Right ventricle myocardium inferior (tissue), 1 donor: ENCODE measurements at regions of chr17 and their contacts with region 1.

Region 1: GRCh38 chr17:48351831-48352332 is 78.1 kb downstream of the SKAP1 start:
- DNase-seq: no peak
- ATAC-seq: no peak

Region 2: GRCh38 chr17:48215583-48216139 is 136.2 kb before region 1 on chr17:
- intact Hi-C with region 1: no loop called
- DNase-seq: no peak
- ATAC-seq: no peak

Region 3: DNA sequence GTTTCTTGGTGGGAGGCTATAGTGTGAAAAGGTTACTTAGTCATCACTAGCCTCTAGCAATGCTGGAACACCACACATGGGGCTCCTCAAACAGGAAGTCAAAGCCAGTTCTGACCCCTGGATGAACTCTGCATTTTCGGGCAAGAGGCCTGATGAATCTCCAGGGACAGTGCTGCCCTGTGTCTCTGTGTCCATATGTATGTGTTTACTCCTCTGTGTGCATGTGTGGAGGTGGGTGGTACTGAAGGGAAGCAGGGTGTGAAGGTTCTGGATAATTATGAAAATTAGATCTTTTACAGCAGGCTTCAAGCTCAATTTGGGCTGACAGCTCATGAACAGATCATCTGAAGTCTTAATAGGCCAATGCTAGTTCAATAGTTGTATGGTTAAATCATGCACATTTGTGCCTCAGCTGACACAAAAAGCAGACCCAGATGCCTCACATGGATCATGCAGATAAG is 110.7 kb before region 1 on chr17:
- intact Hi-C with region 1: no loop called
- DNase-seq: no peak
- ATAC-seq: peak; percentile 74

Region 4: GRCh38 chr17:48374650-48375230 is 22.9 kb after region 1 on chr17:
- intact Hi-C with region 1: no loop called
- DNase-seq: no peak
- ATAC-seq: no peak

Region 5: DNA sequence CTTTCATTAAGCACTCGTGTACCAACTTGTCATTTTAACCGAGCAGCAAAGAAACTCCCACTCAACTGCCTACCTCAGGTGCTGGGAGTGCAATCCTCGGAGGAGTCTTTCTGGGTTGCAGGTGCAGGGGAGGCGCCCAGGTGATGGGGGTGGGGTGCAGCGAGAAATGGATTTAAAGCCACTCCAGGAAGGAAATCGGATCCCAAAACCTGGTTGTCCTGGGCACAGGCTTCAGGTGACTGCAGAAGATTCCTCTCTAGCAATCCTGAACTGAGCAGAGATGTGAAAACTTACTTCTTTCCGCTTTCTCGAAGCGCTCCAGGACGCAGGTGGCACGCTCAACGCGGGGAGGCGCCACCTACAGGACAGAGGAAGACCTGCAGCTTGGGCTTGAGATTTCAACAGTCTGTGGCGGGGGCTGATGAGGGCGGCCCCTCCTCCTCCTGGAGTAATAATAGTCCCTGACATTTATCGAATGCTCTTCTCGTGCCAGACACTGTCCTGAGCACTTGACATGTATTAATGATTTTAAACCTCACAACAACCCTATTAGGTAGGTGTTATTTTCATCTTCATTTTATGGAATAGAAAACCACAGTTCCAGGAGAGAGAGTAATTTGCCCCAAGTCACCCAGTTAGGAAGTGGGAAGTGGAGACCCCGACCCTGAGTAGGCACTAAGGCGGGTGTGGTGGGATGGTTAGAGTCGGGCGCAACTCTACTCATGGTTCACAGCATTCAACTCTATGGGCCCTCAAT is 105.4 kb after region 1 on chr17:
- intact Hi-C with region 1: loop called (anchors 10 kb)
- DNase-seq: peak; percentile 78
- ATAC-seq: peak; percentile 64

Region 6: DNA sequence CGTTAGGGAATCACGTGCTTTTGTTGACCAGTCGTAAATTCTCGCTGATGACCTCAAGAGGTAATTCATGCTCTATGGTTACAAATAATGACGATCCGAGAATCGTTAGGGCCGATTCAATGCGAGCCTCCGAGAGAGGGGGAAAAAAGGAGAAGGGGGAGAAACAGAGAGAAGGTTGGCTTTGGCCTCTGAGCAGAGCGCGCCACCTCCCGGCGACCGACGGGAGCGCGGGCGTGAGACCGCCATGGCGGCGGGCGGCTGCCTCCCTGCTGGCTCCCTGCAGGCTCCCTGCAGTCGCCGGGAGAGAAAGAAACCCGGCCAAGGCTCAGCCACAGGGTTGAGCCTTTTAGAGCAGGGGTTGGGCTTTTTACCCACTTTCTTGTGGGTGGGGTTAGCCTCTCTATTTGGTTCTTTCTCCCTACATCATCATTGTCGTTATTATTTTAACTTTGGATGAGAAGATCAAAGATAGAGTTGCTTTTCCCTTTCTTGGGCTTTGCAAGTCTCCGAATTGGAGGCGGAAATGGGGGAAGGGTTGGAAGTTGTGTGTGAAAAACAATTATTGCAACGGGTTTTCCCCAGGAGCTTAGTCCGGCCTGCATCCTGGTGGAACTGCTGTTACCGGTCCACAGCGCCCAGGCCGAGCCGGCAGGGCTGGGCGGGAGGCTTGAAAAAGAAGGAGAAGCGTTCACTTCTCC is 242.1 kb after region 1 on chr17:
- intact Hi-C with region 1: loop called (anchors 10 kb)
- DNase-seq: peak; percentile 84
- ATAC-seq: peak; percentile 62